Transverse colon (tissue), 4 donors: ENCODE measurements at regions of chr11 and their contacts with region 1.

Region 1: DNA sequence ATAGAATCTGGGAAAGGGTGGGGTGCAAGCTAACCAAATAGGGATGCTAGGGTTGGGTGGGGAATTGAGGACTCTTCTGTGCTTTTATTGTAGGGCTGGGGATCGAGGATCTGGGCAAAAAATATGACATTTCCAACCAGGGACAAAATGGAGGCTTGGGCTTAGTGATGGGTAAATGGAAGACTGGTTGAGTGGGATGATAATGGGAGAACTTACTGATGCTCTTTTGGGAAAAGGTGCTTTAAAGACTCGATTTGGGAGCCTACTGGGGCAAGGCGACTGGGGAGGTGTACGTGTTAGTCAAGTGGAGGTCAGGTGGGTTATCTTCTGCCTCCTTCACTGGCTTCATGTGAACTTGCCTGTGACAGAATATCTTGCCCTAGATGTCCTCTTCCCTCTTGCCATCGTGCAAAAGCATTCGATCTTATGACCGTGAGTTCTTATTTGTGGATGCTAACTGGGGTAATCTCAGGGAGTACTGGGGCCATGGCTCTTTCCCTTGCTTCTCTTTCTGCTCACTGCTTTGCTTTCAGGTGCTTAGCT is 10.4 kb upstream of the RBM4 start:
- DNase-seq: no peak
- H3K4me3 ChIP-seq: no peak overlapping the region
- H3K27ac ChIP-seq: no peak overlapping the region
- H3K4me1 ChIP-seq: peaks cover 7 to 29% (median 10%) of the 10 kb centered on the region in 4 donors
- H3K27me3 ChIP-seq: no peaks in the 10 kb centered on the region
- CTCF ChIP-seq: no peak
- EP300 ChIP-seq: no peak
- POLR2A ChIP-seq: no peak

Region 2: GRCh38 chr11:66418168-66418985 is 209.8 kb before region 1 on chr11:
- in situ Hi-C with region 1: no loop called
- intact Hi-C with region 1: no loop called
- DNase-seq: peak; percentile 56
- H3K4me3 ChIP-seq: no peak overlapping the region
- H3K27ac ChIP-seq: peak overlapping the region in 3 of 4 donors; percentile 53 to 55 (median 55)
- H3K4me1 ChIP-seq: peaks cover 0 to 35% (median 3%) of the 10 kb centered on the region in 4 donors
- H3K27me3 ChIP-seq: peaks cover 31% of the 10 kb centered on the region
- CTCF ChIP-seq: peak in 4 of 5 experiments; percentile 13 to 32 (median 24)
- EP300 ChIP-seq: peak; percentile 41
- POLR2A ChIP-seq: no peak

Region 3: GRCh38 chr11:66568124-66568916 is 59.8 kb before region 1 on chr11 and contains the start of gene CTSF:
- in situ Hi-C with region 1: no loop called
- intact Hi-C with region 1: no loop called
- DNase-seq: peak; percentile 85
- H3K4me3 ChIP-seq: peak within 1 kb of the TSS; percentile 55 to 72 (median 59)
- H3K27ac ChIP-seq: peak within 1 kb of the TSS in 3 of 4 donors; percentile 28 to 72 (median 53)
- H3K4me1 ChIP-seq: peaks cover 5 to 18% (median 13%) of the 10 kb centered on the region in 4 donors
- H3K27me3 ChIP-seq: peaks cover 17% of the 10 kb centered on the region
- CTCF ChIP-seq: no peak
- EP300 ChIP-seq: no peak
- POLR2A ChIP-seq: no peak
- total RNA-seq, gene CTSF: 23.5 to 80.6 (median 39.0) TPM

Region 4: GRCh38 chr11:66653123-66653522 is 25.0 kb after region 1 on chr11:
- in situ Hi-C with region 1: no loop called
- intact Hi-C with region 1: loop called (anchors 2 kb)
- DNase-seq: no peak
- H3K4me3 ChIP-seq: no peak overlapping the region
- H3K27ac ChIP-seq: no peak overlapping the region
- H3K4me1 ChIP-seq: no peaks in the 10 kb centered on the region
- H3K27me3 ChIP-seq: no peaks in the 10 kb centered on the region
- CTCF ChIP-seq: no peak
- EP300 ChIP-seq: no peak
- POLR2A ChIP-seq: no peak

Region 5: GRCh38 chr11:66768088-66768521 is 140.0 kb after region 1 on chr11:
- in situ Hi-C with region 1: no loop called
- intact Hi-C with region 1: no loop called
- DNase-seq: no peak
- H3K4me3 ChIP-seq: no peak overlapping the region
- H3K27ac ChIP-seq: no peak overlapping the region
- H3K4me1 ChIP-seq: no peaks in the 10 kb centered on the region
- H3K27me3 ChIP-seq: no peaks in the 10 kb centered on the region
- CTCF ChIP-seq: no peak
- EP300 ChIP-seq: no peak
- POLR2A ChIP-seq: no peak

Region 6: DNA sequence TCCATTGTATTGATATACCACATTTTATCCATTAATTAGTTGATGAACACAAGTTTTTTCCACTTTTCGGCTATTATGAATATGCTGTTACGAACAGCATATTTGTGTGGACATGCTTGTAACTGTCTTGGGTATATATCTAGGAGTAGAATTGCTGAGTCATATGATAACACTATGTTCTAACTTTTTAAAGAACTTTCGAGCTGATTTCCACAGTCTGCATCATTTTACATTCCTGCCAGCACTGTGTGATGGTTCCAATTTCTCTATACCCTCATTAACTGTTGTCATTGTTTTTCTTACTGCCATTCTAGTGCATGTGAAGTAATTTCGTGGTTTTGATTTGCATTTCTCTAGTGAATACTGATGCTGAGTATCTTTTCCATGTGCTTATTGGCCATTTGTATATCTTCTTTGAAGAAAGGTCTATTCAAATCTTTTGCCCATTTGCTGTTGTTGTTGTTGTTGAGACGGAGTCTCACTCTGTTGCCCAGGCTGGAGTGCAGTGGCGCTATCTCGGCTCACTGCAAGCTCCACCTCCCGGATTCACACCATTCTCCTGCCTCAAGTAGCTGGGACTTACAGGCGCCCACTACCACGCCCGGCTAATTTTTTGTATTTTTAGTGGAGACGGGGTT is 207.8 kb after region 1 on chr11:
- in situ Hi-C with region 1: no loop called
- intact Hi-C with region 1: no loop called
- DNase-seq: no peak
- H3K4me3 ChIP-seq: no peak overlapping the region
- H3K27ac ChIP-seq: no peak overlapping the region
- H3K4me1 ChIP-seq: peaks cover 0 to 10% (median 0%) of the 10 kb centered on the region in 4 donors
- H3K27me3 ChIP-seq: no peaks in the 10 kb centered on the region
- CTCF ChIP-seq: no peak
- EP300 ChIP-seq: no peak
- POLR2A ChIP-seq: no peak